SK-N-SH (cell line): ENCODE measurements at regions of chr2 and their contacts with region 1.

Region 1: GRCh38 chr2:201860636-201861066 is 54.3 kb downstream of the CDK15 start:
- DNase-seq: peak; percentile 79
- H3K4me3 ChIP-seq: no peak overlapping the region; a peak in 1 of 4 replicates
- H3K27ac ChIP-seq: peak overlapping the region; percentile 41 to 53
- H3K4me1 ChIP-seq: peaks cover 3 to 20% of the 10 kb centered on the region in 2 experiments
- H3K27me3 ChIP-seq: no peaks in the 10 kb centered on the region
- CTCF ChIP-seq: peak; percentile 81
- EP300 ChIP-seq: no peak
- RAD21 ChIP-seq: peak; percentile 99

Region 2: DNA sequence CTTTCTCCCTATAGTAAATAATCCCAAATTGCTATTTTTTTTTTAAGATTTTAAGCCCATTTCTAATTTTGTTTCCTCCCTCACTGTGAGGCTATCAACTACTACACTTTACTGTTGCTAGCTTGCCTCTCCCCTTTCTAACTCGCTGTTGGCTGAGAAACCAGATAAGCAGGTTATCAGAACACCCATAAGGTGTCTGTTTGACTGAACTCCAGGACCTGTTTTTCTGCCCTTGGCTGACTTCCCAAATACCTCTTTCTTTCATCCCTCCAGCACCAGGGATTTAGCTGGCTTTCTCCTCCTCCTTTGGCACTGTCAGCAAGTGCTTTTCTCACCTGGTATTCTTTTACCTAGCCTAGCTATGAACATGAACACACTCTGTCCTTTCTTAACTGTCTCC is 420.5 kb before region 1 on chr2:
- CTCF ChIA-PET with region 1: no interaction called
- POLR2A ChIA-PET with region 1: no interaction called
- DNase-seq: peak; percentile 65
- H3K4me3 ChIP-seq: no peak overlapping the region
- H3K27ac ChIP-seq: peak overlapping the region in 1 of 2 experiments; percentile 43; a peak in 1 of 4 replicates
- H3K4me1 ChIP-seq: peaks cover 7 to 8% of the 10 kb centered on the region in 2 experiments; a peak in 3 of 4 replicates
- H3K27me3 ChIP-seq: no peaks in the 10 kb centered on the region
- CTCF ChIP-seq: no peak
- EP300 ChIP-seq: peak in 1 of 2 experiments; percentile 80; a peak in 2 of 4 replicates
- RAD21 ChIP-seq: no peak; the same call in 1 of the 2 replicates

Region 3: DNA sequence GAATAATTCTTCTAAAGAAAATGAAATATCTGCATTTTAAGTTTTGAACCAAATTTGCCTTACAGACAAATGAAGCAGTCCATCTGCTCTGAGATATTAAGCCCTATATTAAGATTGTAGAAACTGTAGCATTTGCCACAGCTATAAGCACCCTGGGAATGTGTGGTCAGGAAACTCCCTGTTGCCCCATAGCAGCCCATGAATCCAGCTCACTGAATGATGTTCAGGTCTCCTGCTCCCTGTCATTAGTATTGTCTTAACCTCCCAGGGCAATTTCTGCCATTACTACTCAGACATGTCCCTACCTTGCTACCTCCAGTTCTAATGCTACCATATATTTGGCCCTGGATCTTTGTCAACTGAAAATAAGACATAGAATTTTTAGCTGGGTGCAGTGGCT is 13.2 kb before region 1 on chr2:
- CTCF ChIA-PET with region 1: interaction called, 21 read pairs
- POLR2A ChIA-PET with region 1: no interaction called
- DNase-seq: no peak
- H3K4me3 ChIP-seq: no peak overlapping the region
- H3K27ac ChIP-seq: no peak overlapping the region
- H3K4me1 ChIP-seq: peaks cover 0 to 8% of the 10 kb centered on the region in 2 experiments; a peak in 2 of 4 replicates
- H3K27me3 ChIP-seq: no peaks in the 10 kb centered on the region
- CTCF ChIP-seq: no peak
- EP300 ChIP-seq: no peak
- RAD21 ChIP-seq: no peak

Region 4: GRCh38 chr2:201886504-201886903 is 25.9 kb after region 1 on chr2:
- CTCF ChIA-PET with region 1: interaction called, 23 read pairs
- POLR2A ChIA-PET with region 1: no interaction called
- DNase-seq: no peak
- H3K4me3 ChIP-seq: no peak overlapping the region
- H3K27ac ChIP-seq: no peak overlapping the region
- H3K4me1 ChIP-seq: peaks cover 44 to 66% of the 10 kb centered on the region in 2 experiments
- H3K27me3 ChIP-seq: no peaks in the 10 kb centered on the region
- CTCF ChIP-seq: no peak
- EP300 ChIP-seq: no peak
- RAD21 ChIP-seq: no peak

Region 5: DNA sequence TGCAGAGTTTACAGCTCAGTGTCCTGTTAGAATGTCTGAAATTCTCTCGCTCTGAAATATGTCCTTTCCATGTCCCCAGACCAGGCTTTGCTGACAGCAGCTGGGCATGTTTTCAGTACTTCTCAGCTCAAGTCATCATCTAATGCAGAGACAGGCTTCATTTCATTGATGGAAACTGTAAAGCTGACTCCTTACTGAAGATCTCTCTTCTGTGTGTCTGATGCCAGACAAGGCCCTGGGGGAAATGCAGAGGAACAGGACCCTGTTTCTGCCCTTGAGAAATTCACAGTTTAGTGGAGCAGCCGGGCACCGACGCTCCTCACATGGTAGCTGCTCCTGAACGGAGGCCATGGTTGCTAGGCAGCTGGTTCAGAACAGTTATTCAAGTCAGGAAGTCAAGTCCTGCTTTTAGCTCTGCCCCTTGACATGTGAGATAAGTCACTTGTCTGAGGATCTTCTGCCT is 148.4 kb after region 1 on chr2:
- CTCF ChIA-PET with region 1: interaction called, 11 read pairs
- POLR2A ChIA-PET with region 1: no interaction called
- DNase-seq: peak; percentile 52
- H3K4me3 ChIP-seq: no peak overlapping the region
- H3K27ac ChIP-seq: peak overlapping the region in 1 of 2 experiments; percentile 89; a peak in 2 of 4 replicates
- H3K4me1 ChIP-seq: peaks cover 1 to 27% of the 10 kb centered on the region in 2 experiments; a peak in 2 of 4 replicates
- H3K27me3 ChIP-seq: no peaks in the 10 kb centered on the region
- CTCF ChIP-seq: no peak
- EP300 ChIP-seq: no peak
- RAD21 ChIP-seq: no peak

Region 6: DNA sequence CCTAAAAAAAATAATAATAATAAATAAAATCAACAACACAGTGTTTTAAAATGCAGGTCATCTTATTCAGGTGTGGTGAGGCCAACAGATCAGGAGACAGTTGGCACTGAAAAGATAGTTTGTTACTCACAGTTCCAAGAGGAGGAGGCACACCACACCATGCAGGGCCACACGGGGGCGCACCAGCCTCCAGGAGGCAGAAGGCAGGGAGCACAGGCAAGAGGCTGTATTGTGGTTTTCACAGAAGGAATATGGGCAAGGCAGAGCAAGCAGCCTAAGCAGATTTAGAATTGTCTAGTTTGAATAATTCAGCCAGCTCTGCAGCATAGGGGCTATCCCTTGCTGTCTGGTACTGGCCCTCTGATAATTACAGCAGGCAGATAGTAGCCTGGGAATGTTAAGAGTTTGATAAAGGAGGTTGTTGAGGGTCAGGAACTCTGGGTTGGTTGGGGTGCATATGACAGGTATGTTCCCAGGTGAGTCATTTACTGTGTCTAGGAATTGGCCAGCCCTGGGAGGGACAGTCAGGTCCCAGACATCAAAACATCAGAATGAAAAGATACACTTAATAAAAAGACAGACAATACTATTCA is 243.7 kb after region 1 on chr2:
- CTCF ChIA-PET with region 1: interaction called, 12 read pairs
- POLR2A ChIA-PET with region 1: no interaction called
- DNase-seq: peak; percentile 31
- H3K4me3 ChIP-seq: no peak overlapping the region; a peak in 1 of 4 replicates
- H3K27ac ChIP-seq: no peak overlapping the region
- H3K4me1 ChIP-seq: peaks cover 11 to 23% of the 10 kb centered on the region in 2 experiments; a peak in 3 of 4 replicates
- H3K27me3 ChIP-seq: no peaks in the 10 kb centered on the region
- CTCF ChIP-seq: peak; percentile 61
- EP300 ChIP-seq: no peak
- RAD21 ChIP-seq: peak; percentile 52

Region 7: GRCh38 chr2:202172439-202173211 is 312.0 kb after region 1 on chr2:
- CTCF ChIA-PET with region 1: interaction called, 76 read pairs
- POLR2A ChIA-PET with region 1: no interaction called
- DNase-seq: no peak
- H3K4me3 ChIP-seq: no peak overlapping the region
- H3K27ac ChIP-seq: 0 out of 4 replicates have a peak overlapping the region, but pooled peaks of 1 of the 2 experiments have one; percentile 16
- H3K4me1 ChIP-seq: peaks cover 0 to 2% of the 10 kb centered on the region in 2 experiments; a peak in 1 of 4 replicates
- H3K27me3 ChIP-seq: no peaks in the 10 kb centered on the region
- CTCF ChIP-seq: no peak
- EP300 ChIP-seq: no peak
- RAD21 ChIP-seq: no peak

Region 8: GRCh38 chr2:202193881-202194353 is 333.3 kb after region 1 on chr2:
- CTCF ChIA-PET with region 1: interaction called, 15 read pairs
- POLR2A ChIA-PET with region 1: no interaction called
- DNase-seq: no peak
- H3K4me3 ChIP-seq: no peak overlapping the region
- H3K27ac ChIP-seq: no peak overlapping the region
- H3K4me1 ChIP-seq: no peaks in the 10 kb centered on the region
- H3K27me3 ChIP-seq: no peaks in the 10 kb centered on the region
- CTCF ChIP-seq: no peak
- EP300 ChIP-seq: no peak
- RAD21 ChIP-seq: no peak